ENCODE measurements at regions of chr16 and their contacts with region 1.

Region 1: DNA sequence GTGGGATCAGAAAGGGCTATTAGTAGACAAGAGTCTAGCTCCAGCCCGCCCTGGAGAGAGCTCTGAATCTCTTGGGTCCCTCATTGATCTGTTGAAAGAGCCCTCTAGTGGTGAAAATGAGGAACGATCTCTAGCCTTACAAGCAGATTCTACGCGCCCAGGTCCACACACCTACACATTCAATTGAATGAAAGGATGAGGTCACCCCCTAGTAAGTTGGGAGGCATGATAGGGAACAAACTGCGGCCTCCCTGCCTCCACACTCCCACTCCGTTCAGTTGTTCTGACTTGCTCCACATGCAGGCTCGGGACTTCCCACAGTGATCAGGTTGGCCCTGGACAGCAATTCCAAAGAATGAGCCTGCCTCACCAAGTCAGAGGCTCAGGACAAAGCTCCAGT is 2.9 kb upstream of the CACNG3 start:
- DNase-seq: peak in 9 of 10 donors; percentile 26 to 85 (median 46)

Region 2: GRCh38 chr16:23729503-23730424 is 523.4 kb before region 1 on chr16:
- intact Hi-C with region 1: loop called (anchors 10 kb)
- DNase-seq: no peak

Region 3: GRCh38 chr16:24041826-24042631 is 211.2 kb before region 1 on chr16:
- intact Hi-C with region 1: loop called (anchors 2 kb)
- DNase-seq: peak; percentile 53 to 95 (median 83)

Measured in posterior cingulate gyrus (tissue), 11 donors.